ENCODE measurements at regions of chr4 and their contacts with region 1.

Region 1: DNA sequence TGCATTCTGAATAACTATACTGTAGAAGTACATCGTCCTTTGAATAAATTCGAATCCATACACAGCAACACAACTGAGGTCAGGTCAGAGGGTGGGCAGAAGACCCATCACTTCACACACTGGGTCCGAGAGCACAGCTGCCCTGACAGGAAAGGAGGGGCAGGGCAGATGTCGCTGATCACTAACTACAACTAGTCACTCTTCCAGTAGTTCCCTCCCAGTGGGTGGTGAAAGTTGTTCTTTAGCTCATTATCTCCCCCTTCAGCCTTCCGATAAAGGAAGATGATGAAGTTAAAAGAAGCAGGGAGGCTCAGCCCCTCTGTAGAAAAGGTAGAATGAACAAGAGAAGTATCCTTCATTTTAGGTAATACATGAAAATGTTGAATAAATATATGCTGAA is 278.9 kb downstream of the INPP4B start:
- DNase-seq: peak; percentile 69 to 74 (median 72)
- H3K4me3 ChIP-seq: peak overlapping the region; percentile 57 to 84
- H3K4me3 Mint-ChIP-seq: peak overlapping the region; percentile 80 to 97 (median 92)
- H3K27ac ChIP-seq: peak overlapping the region; percentile 75
- H3K27ac Mint-ChIP-seq: peak overlapping the region; percentile 86 to 98 (median 96)
- H3K4me1 ChIP-seq: peaks cover 73% of the 10 kb centered on the region
- H3K4me1 Mint-ChIP-seq: peaks cover 40 to 85% (median 50%) of the 10 kb centered on the region in 4 donors
- H3K27me3 ChIP-seq: no peaks in the 10 kb centered on the region
- H3K27me3 Mint-ChIP-seq: no peaks in the 10 kb centered on the region

Region 2: GRCh38 chr4:142126890-142127497 is 440.2 kb before region 1 on chr4:
- CTCF ChIA-PET with region 1: interaction called, 8 read pairs
- POLR2A ChIA-PET with region 1: no interaction called
- intact Hi-C with region 1: loop called (anchors 2 kb)
- DNase-seq: peak; percentile 61 to 67 (median 65)
- H3K4me3 ChIP-seq: no peak overlapping the region
- H3K4me3 Mint-ChIP-seq: no peak overlapping the region
- H3K27ac ChIP-seq: no peak overlapping the region
- H3K27ac Mint-ChIP-seq: peak overlapping the region in 3 of 7 donors; percentile 54 to 57 (median 54)
- H3K4me1 ChIP-seq: peaks cover 31% of the 10 kb centered on the region
- H3K4me1 Mint-ChIP-seq: peaks cover 19 to 33% (median 26%) of the 10 kb centered on the region in 4 donors
- H3K27me3 ChIP-seq: no peaks in the 10 kb centered on the region
- H3K27me3 Mint-ChIP-seq: no peaks in the 10 kb centered on the region

Region 3: DNA sequence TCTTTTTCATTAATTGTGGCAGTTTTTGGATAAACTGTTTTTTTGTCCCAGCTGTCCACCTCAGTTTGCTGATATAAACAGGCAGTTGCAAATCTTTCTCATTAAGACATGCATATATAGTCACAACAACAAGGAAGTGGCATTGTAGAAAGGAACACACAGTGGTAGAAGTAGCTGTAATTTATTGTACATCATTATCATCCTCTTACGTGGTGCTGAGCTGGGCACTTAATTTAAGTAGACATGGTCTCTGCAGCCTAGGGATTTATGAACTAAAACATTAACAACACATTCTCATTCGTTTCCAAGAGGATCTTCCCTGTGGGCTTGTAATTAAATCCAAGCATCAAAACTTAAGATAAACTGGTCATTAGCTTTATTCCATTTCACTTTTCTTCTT is 221.3 kb before region 1 on chr4:
- CTCF ChIA-PET with region 1: interaction called, 107 read pairs
- POLR2A ChIA-PET with region 1: interaction called, 117 read pairs
- intact Hi-C with region 1: no loop called
- DNase-seq: no peak
- H3K4me3 ChIP-seq: no peak overlapping the region
- H3K4me3 Mint-ChIP-seq: peak overlapping the region; percentile 0 to 82 (median 59)
- H3K27ac ChIP-seq: no peak overlapping the region
- H3K27ac Mint-ChIP-seq: peak overlapping the region; percentile 28 to 96 (median 59)
- H3K4me1 ChIP-seq: peaks cover 94% of the 10 kb centered on the region
- H3K4me1 Mint-ChIP-seq: peaks cover 68 to 100% (median 84%) of the 10 kb centered on the region in 4 donors
- H3K27me3 ChIP-seq: no peaks in the 10 kb centered on the region
- H3K27me3 Mint-ChIP-seq: no peaks in the 10 kb centered on the region

Region 4: DNA sequence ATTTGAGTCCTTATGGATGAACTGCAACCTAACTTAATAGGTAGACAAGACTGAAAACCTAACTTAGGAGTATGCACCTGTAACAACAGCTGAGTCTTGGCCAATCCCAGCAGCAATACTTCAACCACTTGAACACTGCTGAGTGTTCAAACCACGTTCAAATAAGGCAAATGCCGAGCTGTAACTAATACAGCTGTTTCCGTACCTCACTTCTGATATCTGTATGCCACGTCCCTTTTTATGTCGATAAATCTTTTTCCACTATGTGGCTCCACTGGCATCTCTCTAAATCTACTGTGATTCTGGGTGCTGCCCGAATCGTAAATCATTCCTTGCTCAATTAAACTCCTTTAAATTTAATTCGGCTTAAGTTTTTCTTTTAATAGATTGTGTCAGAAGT is 180.8 kb before region 1 on chr4:
- CTCF ChIA-PET with region 1: interaction called, 5 read pairs
- POLR2A ChIA-PET with region 1: interaction called, 12 read pairs
- intact Hi-C with region 1: no loop called
- DNase-seq: peak in 4 of 5 donors; percentile 29 to 50 (median 34)
- H3K4me3 ChIP-seq: peak overlapping the region in 1 of 2 donors; percentile 23
- H3K4me3 Mint-ChIP-seq: peak overlapping the region; percentile 59 to 85 (median 75)
- H3K27ac ChIP-seq: peak overlapping the region; percentile 50
- H3K27ac Mint-ChIP-seq: peak overlapping the region; percentile 36 to 88 (median 61)
- H3K4me1 ChIP-seq: peaks cover 85% of the 10 kb centered on the region
- H3K4me1 Mint-ChIP-seq: peaks cover 51 to 85% (median 67%) of the 10 kb centered on the region in 4 donors
- H3K27me3 ChIP-seq: no peaks in the 10 kb centered on the region
- H3K27me3 Mint-ChIP-seq: no peaks in the 10 kb centered on the region

Region 5: DNA sequence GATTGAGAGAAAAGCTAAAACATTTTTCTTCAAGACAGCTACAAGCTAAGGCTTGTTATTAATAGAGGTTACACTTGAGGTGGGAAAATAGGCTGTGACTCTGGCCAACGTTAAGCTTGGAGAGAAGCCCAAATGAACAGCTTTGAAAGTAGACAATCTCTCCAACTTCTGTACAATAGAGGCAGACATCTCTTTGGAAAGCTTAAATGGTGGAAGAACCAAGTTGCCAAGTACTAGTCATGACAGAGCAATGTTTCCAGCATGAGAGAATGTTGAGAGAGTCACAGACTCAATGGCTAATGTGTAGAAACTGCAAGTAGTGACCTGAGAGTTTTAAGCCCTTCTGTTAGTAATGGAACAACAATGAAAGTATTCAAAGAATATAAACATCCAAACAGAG is 19.2 kb before region 1 on chr4:
- CTCF ChIA-PET with region 1: interaction called, 4 read pairs
- POLR2A ChIA-PET with region 1: interaction called, 30 read pairs
- intact Hi-C with region 1: no loop called
- DNase-seq: no peak
- H3K4me3 ChIP-seq: no peak overlapping the region
- H3K4me3 Mint-ChIP-seq: no peak overlapping the region
- H3K27ac ChIP-seq: no peak overlapping the region
- H3K27ac Mint-ChIP-seq: no peak overlapping the region
- H3K4me1 ChIP-seq: peaks cover 40% of the 10 kb centered on the region
- H3K4me1 Mint-ChIP-seq: peaks cover 25 to 43% (median 39%) of the 10 kb centered on the region in 4 donors
- H3K27me3 ChIP-seq: no peaks in the 10 kb centered on the region
- H3K27me3 Mint-ChIP-seq: no peaks in the 10 kb centered on the region

Region 6: DNA sequence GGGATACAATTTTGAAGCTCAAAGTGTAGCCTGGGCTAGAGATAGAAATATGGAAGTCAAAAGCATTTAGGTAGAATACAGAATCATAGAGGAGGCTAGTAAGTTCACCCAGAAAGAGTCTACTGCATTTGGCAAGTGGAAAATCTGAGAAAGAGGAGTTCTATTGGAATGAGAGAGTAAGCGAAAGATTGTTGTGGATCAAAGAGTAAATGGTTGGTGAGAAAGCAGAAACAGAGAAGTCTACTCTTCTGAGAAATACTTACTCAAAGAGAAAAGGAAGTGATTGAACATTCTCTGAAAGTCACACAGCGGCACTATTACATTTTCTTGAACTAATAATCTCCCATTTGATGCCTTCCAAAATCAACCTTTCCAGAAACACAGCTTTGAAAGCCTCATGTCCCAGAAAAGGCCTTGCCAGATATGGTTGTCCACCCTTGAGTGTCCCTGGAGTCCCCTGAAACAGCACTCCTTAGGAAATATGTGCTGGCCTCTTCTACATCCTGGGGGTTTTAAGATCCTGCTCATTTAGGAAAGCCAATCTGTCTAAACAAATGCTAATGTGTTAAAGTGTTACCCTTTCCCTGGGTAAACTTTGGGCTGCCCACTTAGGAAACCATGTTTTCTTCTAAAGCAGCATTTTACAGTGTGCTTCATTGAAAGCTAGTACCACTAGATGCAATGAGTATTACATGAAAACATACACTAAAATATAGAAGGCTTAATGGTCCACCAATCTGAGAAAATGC is 146.3 kb after region 1 on chr4:
- CTCF ChIA-PET with region 1: interaction called, 23 read pairs
- POLR2A ChIA-PET with region 1: interaction called, 10 read pairs
- intact Hi-C with region 1: no loop called
- DNase-seq: no peak
- H3K4me3 ChIP-seq: no peak overlapping the region
- H3K4me3 Mint-ChIP-seq: peak overlapping the region in 7 of 8 donors; percentile 43 to 75 (median 55)
- H3K27ac ChIP-seq: no peak overlapping the region
- H3K27ac Mint-ChIP-seq: peak overlapping the region; percentile 25 to 90 (median 81)
- H3K4me1 ChIP-seq: peaks cover 30% of the 10 kb centered on the region
- H3K4me1 Mint-ChIP-seq: peaks cover 42 to 58% (median 49%) of the 10 kb centered on the region in 4 donors
- H3K27me3 ChIP-seq: no peaks in the 10 kb centered on the region
- H3K27me3 Mint-ChIP-seq: no peaks in the 10 kb centered on the region

Region 7: GRCh38 chr4:142840516-142841123 is 273.4 kb after region 1 on chr4:
- CTCF ChIA-PET with region 1: no interaction called
- POLR2A ChIA-PET with region 1: interaction called, 8 read pairs
- intact Hi-C with region 1: loop called (anchors 2 kb)
- DNase-seq: peak in 4 of 5 donors; percentile 26 to 42 (median 36)
- H3K4me3 ChIP-seq: no peak overlapping the region
- H3K4me3 Mint-ChIP-seq: no peak overlapping the region
- H3K27ac ChIP-seq: no peak overlapping the region
- H3K27ac Mint-ChIP-seq: no peak overlapping the region
- H3K4me1 ChIP-seq: peaks cover 12% of the 10 kb centered on the region
- H3K4me1 Mint-ChIP-seq: peaks cover 8 to 13% (median 11%) of the 10 kb centered on the region in 4 donors
- H3K27me3 ChIP-seq: no peaks in the 10 kb centered on the region
- H3K27me3 Mint-ChIP-seq: peaks cover 5 to 6% of the 10 kb centered on the region in 2 donors

Measured in CD4-positive, alpha-beta memory T cell (primary cell).